B cell (primary cell): ENCODE measurements at regions of chr10 and their contacts with region 1.

Region 1: DNA sequence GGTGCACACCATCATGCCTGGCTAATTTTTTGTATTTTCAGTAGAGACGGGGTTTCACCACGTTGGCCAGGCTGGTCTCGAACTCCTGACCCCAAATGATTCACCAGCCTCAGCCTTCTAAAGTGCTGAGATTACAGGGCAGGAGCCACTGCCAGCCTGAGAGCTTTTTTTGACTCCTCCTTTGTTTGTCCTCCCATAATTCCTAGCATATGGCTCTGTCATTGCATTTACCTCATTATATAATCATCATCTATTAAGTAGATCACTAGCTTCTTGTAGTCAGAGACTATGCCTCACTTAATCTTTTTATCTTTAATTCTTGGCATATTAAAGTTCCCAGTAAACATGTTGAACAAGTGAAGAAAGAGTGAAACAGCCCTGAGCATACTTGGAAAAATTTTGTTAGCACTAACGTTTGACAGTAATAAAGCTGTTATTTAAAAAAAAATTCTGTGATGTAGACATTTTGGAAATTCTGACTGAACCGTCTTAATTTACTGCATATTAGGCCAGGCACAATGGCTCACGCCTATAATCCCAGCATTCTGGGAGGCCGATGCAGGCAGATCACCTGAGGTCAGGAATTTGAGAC is 82.0 kb downstream of the CPEB3 start:
- DNase-seq: no peak
- ATAC-seq: no peak
- H3K4me3 ChIP-seq: no peak overlapping the region
- H3K4me3 Mint-ChIP-seq: no peak overlapping the region
- H3K27ac ChIP-seq: no peak overlapping the region
- H3K27ac Mint-ChIP-seq: no peak overlapping the region
- H3K4me1 ChIP-seq: peaks cover 0 to 4% of the 10 kb centered on the region in 2 donors
- H3K4me1 Mint-ChIP-seq: peaks cover 3% of the 10 kb centered on the region
- H3K27me3 ChIP-seq: no peaks in the 10 kb centered on the region
- H3K27me3 Mint-ChIP-seq: no peaks in the 10 kb centered on the region
- CTCF ChIP-seq: no peak

Region 2: DNA sequence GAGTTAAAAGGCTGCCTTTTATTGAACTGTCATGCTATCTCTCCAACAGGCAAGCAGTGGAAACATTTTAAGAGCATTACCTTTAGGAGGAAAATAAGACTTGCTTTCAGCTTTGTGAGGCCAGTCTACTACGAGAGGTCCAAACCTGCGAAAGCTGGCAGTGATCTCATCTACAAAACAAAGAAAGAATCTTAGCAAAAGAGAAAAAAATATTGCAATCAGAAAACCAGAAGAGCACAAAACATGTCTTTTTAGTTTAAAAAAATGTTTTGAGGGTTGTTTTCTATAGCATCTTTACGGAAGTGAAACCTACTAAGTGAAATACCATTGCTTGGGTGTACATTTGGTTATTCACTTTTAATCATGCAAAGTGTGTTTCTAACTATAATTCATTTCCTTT is 65.9 kb before region 1 on chr10:
- CTCF ChIA-PET with region 1: interaction called, 6 read pairs
- POLR2A ChIA-PET with region 1: interaction called, 13 read pairs
- intact Hi-C with region 1: no loop called
- DNase-seq: peak; percentile 61
- ATAC-seq: peak; percentile 39
- H3K4me3 ChIP-seq: peak overlapping the region; percentile 6 to 51 (median 27)
- H3K4me3 Mint-ChIP-seq: peak overlapping the region; percentile 79
- H3K27ac ChIP-seq: peak overlapping the region; percentile 52 to 61
- H3K27ac Mint-ChIP-seq: peak overlapping the region; percentile 88
- H3K4me1 ChIP-seq: peaks cover 34 to 53% of the 10 kb centered on the region in 2 donors
- H3K4me1 Mint-ChIP-seq: peaks cover 59% of the 10 kb centered on the region
- H3K27me3 ChIP-seq: no peaks in the 10 kb centered on the region
- H3K27me3 Mint-ChIP-seq: no peaks in the 10 kb centered on the region
- CTCF ChIP-seq: no peak

Region 3: GRCh38 chr10:92156874-92157773 is 51.7 kb before region 1 on chr10:
- CTCF ChIA-PET with region 1: no interaction called
- POLR2A ChIA-PET with region 1: no interaction called
- intact Hi-C with region 1: loop called (anchors 10 kb)
- DNase-seq: no peak
- ATAC-seq: no peak
- H3K4me3 ChIP-seq: no peak overlapping the region
- H3K4me3 Mint-ChIP-seq: no peak overlapping the region
- H3K27ac ChIP-seq: no peak overlapping the region
- H3K27ac Mint-ChIP-seq: no peak overlapping the region
- H3K4me1 ChIP-seq: no peaks in the 10 kb centered on the region
- H3K4me1 Mint-ChIP-seq: peaks cover 1% of the 10 kb centered on the region
- H3K27me3 ChIP-seq: no peaks in the 10 kb centered on the region
- H3K27me3 Mint-ChIP-seq: no peaks in the 10 kb centered on the region
- CTCF ChIP-seq: no peak